HAP-1 (cell line): ENCODE measurements at regions of chr10 and their contacts with region 1.

Region 1: GRCh38 chr10:25725918-25726716 is 207.9 kb upstream of the MYO3A start:
- DNase-seq: peak; percentile 53 to 60
- H3K4me3 ChIP-seq: no peak overlapping the region
- H3K4me1 ChIP-seq: no peaks in the 10 kb centered on the region
- H3K27me3 ChIP-seq: no peaks in the 10 kb centered on the region

Region 2: DNA sequence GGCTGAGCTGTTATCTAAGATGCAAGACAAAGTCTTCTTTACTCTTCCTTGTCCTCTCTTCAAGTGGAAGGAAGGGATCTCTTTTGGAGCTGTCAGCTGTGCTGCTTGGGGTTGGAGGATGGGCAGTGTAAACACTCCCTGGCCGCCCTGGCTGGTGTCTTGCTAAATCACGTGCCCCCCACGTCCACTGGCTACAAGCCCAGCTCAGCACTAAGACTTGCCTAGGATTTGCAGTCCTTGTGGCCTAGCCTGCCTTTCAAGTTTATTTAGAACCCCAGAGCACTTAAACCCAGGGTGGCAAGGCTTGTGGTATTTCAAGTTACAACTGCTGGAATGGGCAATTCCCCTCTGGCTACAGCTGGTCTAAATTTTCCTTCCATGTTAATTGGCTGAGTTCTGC is 64.5 kb before region 1 on chr10:
- in situ Hi-C with region 1: no loop called
- DNase-seq: no peak
- H3K4me3 ChIP-seq: no peak overlapping the region
- H3K4me1 ChIP-seq: no peaks in the 10 kb centered on the region
- H3K27me3 ChIP-seq: no peaks in the 10 kb centered on the region

Region 3: GRCh38 chr10:26269754-26270153 is 543.6 kb after region 1 on chr10:
- in situ Hi-C with region 1: loop called (anchors 25 kb)
- DNase-seq: peak; percentile 11 to 53
- H3K4me3 ChIP-seq: no peak overlapping the region
- H3K4me1 ChIP-seq: peaks cover 2% of the 10 kb centered on the region; the same call in 1 of the 2 replicates
- H3K27me3 ChIP-seq: no peaks in the 10 kb centered on the region

Region 4: GRCh38 chr10:26516540-26517101 is 790.5 kb after region 1 on chr10:
- in situ Hi-C with region 1: no loop called
- DNase-seq: no peak
- H3K4me3 ChIP-seq: no peak overlapping the region
- H3K4me1 ChIP-seq: peaks cover 5% of the 10 kb centered on the region
- H3K27me3 ChIP-seq: no peaks in the 10 kb centered on the region

Region 5: DNA sequence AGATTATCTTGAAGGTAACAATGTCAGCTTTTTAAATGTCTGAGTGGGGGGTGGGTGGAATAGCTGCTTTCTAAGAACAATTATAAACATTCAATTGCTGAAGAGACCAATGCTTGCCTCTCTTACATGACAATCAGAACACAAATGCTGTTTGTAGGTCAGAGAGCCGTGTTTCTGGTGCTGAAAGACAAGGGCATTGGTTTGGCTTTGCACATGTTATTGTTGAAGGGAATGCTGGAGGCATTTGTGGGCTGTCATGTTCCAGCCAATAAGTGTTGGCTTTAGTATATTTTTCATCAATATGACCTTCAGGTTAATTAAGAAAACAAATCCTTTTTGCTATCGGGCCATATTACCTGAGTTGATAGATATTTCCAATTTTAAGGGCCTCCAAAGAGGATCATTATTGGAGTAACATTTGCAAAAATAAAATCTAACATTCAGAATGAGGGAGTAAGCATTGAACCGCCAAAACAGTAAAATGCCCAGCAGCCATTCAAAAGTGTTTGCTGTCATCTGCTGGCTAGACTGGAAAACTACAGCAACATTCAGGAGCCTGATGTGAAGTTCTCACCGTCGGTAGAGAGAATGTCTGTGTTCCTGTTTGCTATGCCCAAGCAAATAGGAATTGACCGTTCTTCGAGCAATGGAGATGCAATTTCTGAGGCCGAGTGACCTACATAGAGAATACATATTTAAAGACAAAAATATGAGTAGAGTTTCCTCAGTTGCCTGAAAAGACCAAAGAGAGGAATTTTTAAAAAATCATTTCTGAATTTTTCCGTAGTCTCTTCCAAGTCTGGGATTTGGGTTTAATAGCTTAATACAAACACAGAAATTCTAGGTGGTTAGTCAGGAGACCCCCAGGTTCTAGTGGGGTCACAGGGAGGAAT is 830.9 kb after region 1 on chr10:
- in situ Hi-C with region 1: loop called (anchors 25 kb)
- DNase-seq: peak; percentile 28 to 47
- H3K4me3 ChIP-seq: no peak overlapping the region
- H3K4me1 ChIP-seq: peaks cover 6% of the 10 kb centered on the region
- H3K27me3 ChIP-seq: no peaks in the 10 kb centered on the region